ENCODE measurements at regions of chr2 and their contacts with region 1.

Region 1: DNA sequence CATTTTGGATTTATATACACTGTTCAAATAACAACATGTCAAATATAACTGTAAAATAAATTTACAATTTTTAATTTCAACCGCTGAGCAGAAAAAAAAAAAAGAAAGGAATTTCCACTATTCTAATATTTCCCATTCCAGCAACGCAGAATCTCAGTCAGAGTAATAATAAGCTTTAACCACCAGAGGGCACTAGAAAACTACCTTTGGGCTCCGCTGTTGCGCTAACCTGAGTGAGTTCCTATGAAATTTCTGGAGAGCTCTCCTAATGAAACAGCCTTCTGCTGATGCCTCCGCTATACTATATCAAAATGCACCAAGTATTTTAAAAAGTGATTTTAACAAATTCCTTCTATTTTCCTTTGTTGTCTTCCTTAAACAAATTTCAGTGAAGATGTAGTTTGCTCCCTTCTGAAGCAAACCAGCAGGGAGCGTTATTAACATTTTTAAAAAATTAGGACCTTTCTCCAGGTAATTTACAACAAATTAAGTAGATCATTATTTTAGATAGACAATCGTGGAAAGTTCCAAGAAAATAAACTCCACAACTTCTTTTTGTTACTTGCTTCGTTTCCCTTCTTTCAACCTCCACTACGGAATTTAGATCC is 23.0 kb downstream of the ERMN start:
- DNase-seq: peak; percentile 53
- ATAC-seq: peak; percentile 78
- H3K4me3 Mint-ChIP-seq: no peak overlapping the region
- H3K27ac Mint-ChIP-seq: no peak overlapping the region
- H3K4me1 Mint-ChIP-seq: peaks cover 23% of the 10 kb centered on the region
- H3K27me3 Mint-ChIP-seq: peaks cover 20% of the 10 kb centered on the region

Region 2: GRCh38 chr2:157287160-157287559 is 15.4 kb before region 1 on chr2:
- CTCF ChIA-PET with region 1: interaction called, 26 read pairs
- POLR2A ChIA-PET with region 1: no interaction called
- DNase-seq: no peak
- ATAC-seq: no peak
- H3K4me3 Mint-ChIP-seq: no peak overlapping the region
- H3K27ac Mint-ChIP-seq: no peak overlapping the region
- H3K4me1 Mint-ChIP-seq: no peaks in the 10 kb centered on the region
- H3K27me3 Mint-ChIP-seq: peaks cover 10% of the 10 kb centered on the region

Region 3: DNA sequence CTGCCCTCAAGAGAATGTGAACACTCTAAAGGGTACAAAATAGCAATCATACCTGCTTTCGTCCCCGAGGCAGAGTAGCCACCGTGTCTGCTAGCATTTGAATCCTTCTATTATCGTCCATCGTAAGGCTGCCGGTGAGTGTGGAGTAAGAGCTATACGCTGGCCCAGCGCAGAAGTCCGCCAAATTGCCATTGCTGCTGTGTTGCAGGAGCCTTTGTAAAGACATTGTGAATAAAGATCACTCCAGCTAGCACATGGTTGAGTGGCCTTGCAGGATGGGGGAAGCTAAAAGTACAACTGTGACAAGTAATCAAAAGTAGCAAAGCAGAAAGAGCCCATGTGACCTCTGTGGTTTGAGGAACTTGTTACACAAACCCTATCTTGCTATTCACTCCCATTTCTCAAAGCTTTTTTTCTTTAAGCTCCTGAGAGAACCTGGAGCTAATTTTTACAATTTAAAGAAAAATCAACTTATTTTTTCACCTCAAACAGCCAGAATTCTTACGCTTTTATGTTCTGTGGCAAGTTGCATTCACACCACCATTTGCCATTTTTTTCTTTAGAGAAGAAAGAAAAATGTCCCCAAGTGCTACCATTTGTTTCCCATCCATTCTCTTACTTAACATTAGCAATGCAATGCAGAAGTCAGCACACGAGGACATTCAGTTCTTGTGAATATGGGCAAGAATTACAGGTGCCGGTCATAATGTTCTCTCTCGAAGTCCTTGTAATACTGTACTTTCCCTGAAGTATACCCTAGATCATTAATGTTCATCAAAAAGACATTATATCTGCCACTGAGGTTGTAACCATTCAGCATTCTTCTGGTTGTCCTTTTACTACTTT is 141.4 kb after region 1 on chr2 and contains the start of gene CYTIP:
- CTCF ChIA-PET with region 1: interaction called, 16 read pairs
- POLR2A ChIA-PET with region 1: interaction called, 3 read pairs
- DNase-seq: peak; percentile 87
- ATAC-seq: peak; percentile 45
- H3K4me3 Mint-ChIP-seq: peak within 1 kb of the TSS; percentile 94
- H3K27ac Mint-ChIP-seq: peak within 1 kb of the TSS; percentile 92
- H3K4me1 Mint-ChIP-seq: peaks cover 33% of the 10 kb centered on the region
- H3K27me3 Mint-ChIP-seq: no peaks in the 10 kb centered on the region
- total RNA-seq, gene CYTIP: 222 to 227 TPM

Region 4: GRCh38 chr2:157480182-157480961 is 177.8 kb after region 1 on chr2:
- CTCF ChIA-PET with region 1: interaction called, 138 read pairs
- POLR2A ChIA-PET with region 1: no interaction called
- DNase-seq: peak; percentile 57
- ATAC-seq: peak; percentile 32
- H3K4me3 Mint-ChIP-seq: peak overlapping the region; percentile 80
- H3K27ac Mint-ChIP-seq: peak overlapping the region; percentile 98
- H3K4me1 Mint-ChIP-seq: peaks cover 79% of the 10 kb centered on the region
- H3K27me3 Mint-ChIP-seq: no peaks in the 10 kb centered on the region

Region 5: GRCh38 chr2:157596992-157597681 is 294.5 kb after region 1 on chr2:
- CTCF ChIA-PET with region 1: interaction called, 46 read pairs
- POLR2A ChIA-PET with region 1: no interaction called
- DNase-seq: peak; percentile 69
- ATAC-seq: peak; percentile 82
- H3K4me3 Mint-ChIP-seq: peak overlapping the region; percentile 62
- H3K27ac Mint-ChIP-seq: no peak overlapping the region
- H3K4me1 Mint-ChIP-seq: peaks cover 12% of the 10 kb centered on the region
- H3K27me3 Mint-ChIP-seq: peaks cover 18% of the 10 kb centered on the region

Region 6: GRCh38 chr2:158006961-158007719 is 704.5 kb after region 1 on chr2:
- CTCF ChIA-PET with region 1: interaction called, 12 read pairs
- POLR2A ChIA-PET with region 1: no interaction called
- DNase-seq: peak; percentile 31
- ATAC-seq: peak; percentile 65
- H3K4me3 Mint-ChIP-seq: no peak overlapping the region
- H3K27ac Mint-ChIP-seq: no peak overlapping the region
- H3K4me1 Mint-ChIP-seq: peaks cover 12% of the 10 kb centered on the region
- H3K27me3 Mint-ChIP-seq: peaks cover 5% of the 10 kb centered on the region

Measured in activated CD8-positive, alpha-beta T cell treated with anti-CD3 and anti-CD28 coated beads, Interleukin-2, amount 10 ng/mL, durations not matched to agents 7 days and 5 days (primary cell).